ENCODE measurements at regions of chr22 and their contacts with region 1.

Region 1: GRCh38 chr22:43658823-43659222 is 153.3 kb downstream of the EFCAB6 start:
- DNase-seq: no peak
- ATAC-seq: no peak
- H3K4me3 ChIP-seq: no peak overlapping the region
- H3K27ac ChIP-seq: no peak overlapping the region
- H3K4me1 ChIP-seq: no peaks in the 10 kb centered on the region
- H3K27me3 ChIP-seq: peaks cover 2% of the 10 kb centered on the region; the same call in 1 of the 2 replicates
- CTCF ChIP-seq: no peak

Region 2: DNA sequence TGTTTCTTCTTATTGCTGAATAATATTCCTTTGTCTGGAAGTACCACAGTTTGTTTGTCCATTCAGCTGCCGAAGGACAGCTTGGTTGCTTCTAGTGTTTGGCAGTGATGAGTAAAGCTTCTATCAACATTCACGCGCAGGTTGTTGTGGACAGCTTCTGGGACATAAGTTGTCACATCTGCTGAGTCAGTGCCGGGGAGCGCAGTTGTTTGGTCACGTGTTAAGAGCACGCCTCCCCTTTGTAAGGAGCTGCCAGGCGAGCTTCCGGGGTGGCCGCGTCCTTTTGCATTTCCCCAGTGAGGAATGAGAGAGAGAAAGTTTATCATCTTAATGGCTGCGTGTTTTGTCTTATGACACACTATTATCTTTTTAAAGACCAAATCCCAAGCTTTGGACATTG is 326.7 kb after region 1 on chr22:
- CTCF ChIA-PET with region 1: no interaction called
- POLR2A ChIA-PET with region 1: interaction called, 15 read pairs
- in situ Hi-C with region 1: no loop called
- intact Hi-C with region 1: no loop called
- DNase-seq: no peak
- ATAC-seq: no peak
- H3K4me3 ChIP-seq: no peak overlapping the region
- H3K27ac ChIP-seq: no peak overlapping the region
- H3K4me1 ChIP-seq: no peaks in the 10 kb centered on the region
- H3K27me3 ChIP-seq: no peaks in the 10 kb centered on the region
- CTCF ChIP-seq: no peak

Region 3: DNA sequence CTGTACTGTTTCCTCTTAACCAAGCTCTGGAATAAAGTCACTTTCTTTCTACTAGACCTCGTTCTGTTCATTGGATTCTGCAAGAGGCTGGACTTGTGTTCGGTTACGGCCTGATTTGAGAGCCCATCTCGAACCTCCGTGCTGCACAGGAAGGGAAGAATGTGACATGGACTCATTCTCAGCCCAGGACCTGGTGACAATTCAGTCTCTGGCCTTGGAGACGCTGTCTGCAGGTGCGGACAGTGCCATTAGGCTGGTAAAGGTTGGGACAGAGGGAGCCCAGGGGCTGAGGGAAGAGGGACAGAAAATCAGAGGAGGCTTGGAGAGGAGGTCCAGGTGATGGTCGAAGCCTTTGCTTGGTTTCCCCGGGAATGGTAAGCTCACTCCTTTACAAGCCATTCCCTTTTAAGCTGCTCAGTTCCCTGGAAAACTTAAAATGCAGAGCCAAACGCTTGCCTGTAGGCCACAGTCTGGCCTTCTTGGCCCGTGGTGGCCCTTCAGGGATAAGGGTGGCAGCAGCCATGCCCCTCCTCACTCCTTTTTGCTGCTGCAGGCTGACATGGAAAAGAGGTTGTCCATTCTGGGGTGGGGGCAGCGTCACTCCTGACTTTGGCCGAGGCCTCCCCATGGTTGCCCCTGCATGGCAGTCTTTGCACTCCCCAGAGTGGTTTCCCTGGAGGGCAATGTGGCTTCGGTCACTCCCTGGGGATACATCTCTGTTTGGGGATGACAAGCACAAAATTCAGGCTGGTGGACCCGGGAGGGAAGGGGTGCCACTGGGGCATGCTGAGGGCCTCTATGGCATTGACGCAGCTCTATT is 601.6 kb after region 1 on chr22:
- CTCF ChIA-PET with region 1: no interaction called
- POLR2A ChIA-PET with region 1: no interaction called
- in situ Hi-C with region 1: no loop called
- intact Hi-C with region 1: no loop called
- DNase-seq: no peak
- ATAC-seq: no peak
- H3K4me3 ChIP-seq: no peak overlapping the region
- H3K27ac ChIP-seq: no peak overlapping the region
- H3K4me1 ChIP-seq: no peaks in the 10 kb centered on the region
- H3K27me3 ChIP-seq: no peaks in the 10 kb centered on the region
- CTCF ChIP-seq: no peak

Measured in Panc1 (cell line).